ENCODE measurements at regions of chr1 and their contacts with region 1.

Region 1: DNA sequence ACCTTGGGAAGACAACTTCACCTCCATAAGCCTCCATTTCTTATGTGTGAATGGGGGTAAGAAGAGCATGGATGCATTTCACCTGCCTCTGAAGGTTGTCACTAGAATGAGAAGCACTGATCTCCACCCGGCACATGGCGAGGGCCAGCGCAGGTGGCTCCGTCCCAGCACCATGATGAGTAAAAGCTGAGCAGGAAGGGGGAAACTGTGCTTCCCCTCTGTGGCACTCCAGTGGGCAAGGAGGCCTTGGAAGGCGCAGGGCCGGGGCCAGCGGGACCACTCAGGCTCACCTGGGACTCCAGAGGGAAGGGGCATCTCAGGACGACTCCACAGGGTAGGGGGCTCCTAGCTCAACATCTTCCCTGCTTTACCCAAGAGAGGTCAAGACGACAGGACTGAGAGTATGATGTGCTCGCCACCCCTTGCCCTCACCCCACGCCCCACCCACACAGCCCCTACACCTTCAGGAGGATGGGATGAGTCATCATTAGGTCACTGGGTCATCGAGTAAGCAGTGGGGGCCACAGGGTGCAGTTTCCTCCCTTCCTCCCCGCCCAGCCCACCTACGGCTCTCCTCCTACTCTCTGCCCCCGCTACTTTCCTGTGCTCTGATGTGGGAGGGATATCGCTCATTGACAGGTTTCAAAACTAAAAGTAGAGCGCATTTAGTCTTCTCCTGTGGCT is 112.1 kb downstream of the HIVEP3 start:
- DNase-seq: no peak
- ATAC-seq: no peak

Region 2: DNA sequence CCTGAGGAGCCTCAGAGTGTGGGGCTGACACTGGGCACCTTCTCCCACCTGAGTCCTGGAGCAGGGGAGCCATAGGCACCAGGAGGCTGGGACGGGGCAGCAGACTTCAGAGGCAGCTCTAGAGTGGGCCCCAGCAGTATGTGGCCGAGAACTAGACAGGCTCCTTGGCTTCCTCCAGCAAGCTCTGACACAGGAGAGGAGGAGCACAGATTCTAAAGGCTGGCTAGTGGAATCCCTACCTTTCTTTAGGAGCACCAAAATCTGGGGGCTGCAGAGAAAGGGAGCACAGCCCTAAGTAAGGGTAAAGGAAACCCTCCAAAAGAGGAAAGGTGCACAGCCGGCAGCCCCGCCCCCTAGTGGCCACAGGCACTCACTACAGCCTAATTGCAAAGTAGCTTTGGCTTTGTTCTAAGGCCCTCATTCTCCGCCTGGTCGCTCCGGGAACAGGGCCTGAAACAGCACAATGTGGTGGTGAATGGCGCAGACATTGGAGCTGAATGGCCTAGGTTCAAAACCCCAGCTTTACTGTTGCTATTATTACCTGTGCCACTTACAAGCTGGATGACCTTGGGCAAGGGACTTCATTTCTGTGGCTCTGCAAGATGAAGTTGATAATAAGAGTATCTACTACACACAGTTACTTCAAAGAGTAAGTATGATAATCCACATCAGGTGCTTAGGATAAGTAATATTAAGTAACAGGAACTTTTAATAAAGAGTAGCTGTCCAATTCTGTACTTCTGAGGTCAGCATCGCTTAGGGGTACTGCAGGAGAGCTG is 366.7 kb after region 1 on chr1:
- intact Hi-C with region 1: loop called in 1 of 2 experiments (anchors 5 kb)
- DNase-seq: peak; percentile 60
- ATAC-seq: peak; percentile 66 to 67

Measured in left cardiac atrium (tissue), 4 donors.